PC-9 (cell line): ENCODE measurements at regions of chr7 and their contacts with region 1.

Region 1: DNA sequence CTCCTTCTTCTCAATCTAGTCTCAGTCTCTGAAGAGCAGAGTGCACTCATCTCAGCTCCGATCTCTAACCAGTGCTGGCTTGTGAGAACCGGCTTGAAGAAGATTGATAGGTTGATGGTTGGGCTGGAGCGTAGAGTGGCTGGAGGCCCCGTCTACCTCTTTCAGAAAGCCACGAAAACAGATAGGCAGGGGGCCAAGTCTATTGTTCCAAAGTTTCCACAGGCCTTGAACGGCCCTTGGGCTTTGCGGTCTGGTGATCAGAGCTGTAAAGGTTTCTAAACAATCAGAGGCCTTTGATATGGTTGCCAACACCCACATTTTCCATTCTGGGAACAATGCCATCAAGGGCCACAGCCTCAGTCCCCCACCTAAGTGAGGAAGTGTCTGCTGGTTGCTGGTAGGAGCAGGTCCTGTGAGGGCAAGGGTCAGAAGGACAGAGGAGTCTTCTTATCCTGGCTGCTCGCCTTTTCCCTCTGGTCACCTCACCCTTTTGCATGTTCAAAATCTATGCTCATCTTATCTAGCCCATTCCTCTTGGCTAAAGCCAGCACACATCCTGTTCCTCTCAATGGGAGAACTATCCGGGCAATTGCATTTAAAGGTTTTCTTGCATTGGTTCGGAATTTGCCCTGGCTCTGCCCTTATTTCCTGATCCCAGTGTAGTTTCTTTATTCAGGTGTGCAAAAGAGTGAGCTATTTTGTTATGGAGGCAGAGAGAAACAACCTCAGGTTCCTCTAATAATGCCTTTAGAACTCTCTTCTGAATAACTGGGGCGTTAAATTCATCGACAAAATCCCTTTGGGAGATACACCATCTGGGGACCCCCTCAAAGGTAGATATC is 70.3 kb upstream of the KMT2E start:
- DNase-seq: peak; percentile 48 to 96
- H3K4me3 ChIP-seq: no peak overlapping the region
- H3K27ac ChIP-seq: no peak overlapping the region
- H3K4me1 ChIP-seq: no peaks in the 10 kb centered on the region; the same call in 1 of the 2 replicates
- H3K27me3 ChIP-seq: no peaks in the 10 kb centered on the region
- CTCF ChIP-seq: no peak

Region 2: DNA sequence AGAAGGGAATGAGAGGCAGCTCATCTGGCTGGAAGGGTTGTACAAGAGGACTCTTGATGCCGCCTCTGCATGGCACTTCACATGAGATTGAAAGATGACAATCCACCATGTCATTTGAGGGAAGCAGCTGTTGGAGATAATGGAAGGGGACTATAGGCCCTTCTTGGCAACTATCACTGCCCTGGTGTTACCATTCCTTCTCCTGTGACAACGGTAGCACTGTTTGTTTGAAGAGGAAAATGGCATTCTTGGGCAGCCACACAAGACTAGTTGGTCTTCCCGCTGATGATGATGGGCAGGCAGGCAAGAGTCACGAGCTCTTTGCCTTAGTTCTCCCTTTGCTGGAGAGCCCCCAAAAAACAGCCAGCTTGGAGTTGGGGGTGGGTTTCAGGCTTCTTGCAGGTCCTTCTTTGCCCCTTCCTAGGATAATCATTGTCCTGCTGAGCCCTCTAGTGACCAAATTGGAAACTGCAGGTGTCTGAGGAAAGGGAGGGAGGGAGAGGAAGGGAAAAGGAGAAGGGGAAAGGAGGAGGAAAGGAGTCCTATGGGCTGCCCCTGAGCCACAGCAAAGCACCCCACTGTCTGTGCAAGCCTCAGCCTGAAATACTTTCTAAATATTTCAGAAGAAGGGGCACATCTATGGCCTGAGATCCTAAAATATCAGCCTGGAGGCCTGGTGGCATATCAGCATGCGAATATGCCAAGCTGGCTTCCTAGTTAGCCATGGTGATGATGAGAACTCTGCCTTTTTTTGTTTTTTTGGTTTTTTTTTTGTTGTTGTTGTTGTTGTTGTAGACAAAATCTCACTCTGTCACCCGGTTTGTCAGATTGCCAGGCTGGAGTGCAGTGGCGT is 95.4 kb before region 1 on chr7:
- CTCF ChIA-PET with region 1: no interaction called
- POLR2A ChIA-PET with region 1: no interaction called
- intact Hi-C with region 1: no loop called
- DNase-seq: peak in 1 of 2 experiments; percentile 50
- H3K4me3 ChIP-seq: no peak overlapping the region
- H3K27ac ChIP-seq: no peak overlapping the region
- H3K4me1 ChIP-seq: no peaks in the 10 kb centered on the region
- H3K27me3 ChIP-seq: peaks cover 67% of the 10 kb centered on the region
- CTCF ChIP-seq: peak; percentile 97

Region 3: DNA sequence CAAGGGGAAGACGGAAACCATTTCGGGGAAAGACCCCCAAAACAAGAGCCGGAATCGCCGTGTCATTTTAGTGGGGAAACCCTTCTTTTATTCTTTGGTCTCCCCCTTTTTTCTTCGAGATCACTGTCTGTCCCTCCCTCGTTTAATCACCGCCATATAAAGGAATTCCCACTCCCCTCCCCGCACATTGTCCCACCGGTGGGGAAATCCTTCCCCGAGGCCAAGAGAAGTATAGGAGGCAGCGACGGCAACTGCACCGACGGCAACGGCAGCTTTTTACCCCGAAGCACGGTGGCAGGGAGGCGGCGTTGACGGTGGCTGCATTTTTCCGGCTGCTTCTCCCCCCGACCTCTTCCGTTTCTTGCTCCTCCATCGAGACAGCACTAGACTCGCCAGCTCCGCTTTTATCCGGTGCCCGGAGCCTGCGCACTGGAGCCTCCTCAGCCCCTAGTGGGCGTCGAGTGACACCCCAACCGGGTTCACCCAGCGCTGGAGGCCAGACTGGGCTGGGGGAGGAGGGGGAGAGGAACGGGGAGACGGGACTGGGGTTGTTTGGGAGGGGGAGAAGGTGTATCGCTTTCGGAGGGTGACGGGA is 69.6 kb after region 1 on chr7:
- CTCF ChIA-PET with region 1: no interaction called
- POLR2A ChIA-PET with region 1: interaction called, 3 read pairs
- intact Hi-C with region 1: loop called (anchors 1 kb)
- DNase-seq: peak; percentile 74 to 92
- H3K4me3 ChIP-seq: peak overlapping the region; percentile 95
- H3K27ac ChIP-seq: peak overlapping the region; percentile 98
- H3K4me1 ChIP-seq: peaks cover 55% of the 10 kb centered on the region
- H3K27me3 ChIP-seq: no peaks in the 10 kb centered on the region
- CTCF ChIP-seq: peak; percentile 55; the same call in 1 of the 2 replicates

Region 4: GRCh38 chr7:105278973-105279687 is 335.4 kb after region 1 on chr7:
- CTCF ChIA-PET with region 1: no interaction called
- POLR2A ChIA-PET with region 1: no interaction called
- intact Hi-C with region 1: no loop called
- DNase-seq: no peak
- H3K4me3 ChIP-seq: no peak overlapping the region
- H3K27ac ChIP-seq: no peak overlapping the region
- H3K4me1 ChIP-seq: no peaks in the 10 kb centered on the region
- H3K27me3 ChIP-seq: no peaks in the 10 kb centered on the region
- CTCF ChIP-seq: no peak

Region 5: DNA sequence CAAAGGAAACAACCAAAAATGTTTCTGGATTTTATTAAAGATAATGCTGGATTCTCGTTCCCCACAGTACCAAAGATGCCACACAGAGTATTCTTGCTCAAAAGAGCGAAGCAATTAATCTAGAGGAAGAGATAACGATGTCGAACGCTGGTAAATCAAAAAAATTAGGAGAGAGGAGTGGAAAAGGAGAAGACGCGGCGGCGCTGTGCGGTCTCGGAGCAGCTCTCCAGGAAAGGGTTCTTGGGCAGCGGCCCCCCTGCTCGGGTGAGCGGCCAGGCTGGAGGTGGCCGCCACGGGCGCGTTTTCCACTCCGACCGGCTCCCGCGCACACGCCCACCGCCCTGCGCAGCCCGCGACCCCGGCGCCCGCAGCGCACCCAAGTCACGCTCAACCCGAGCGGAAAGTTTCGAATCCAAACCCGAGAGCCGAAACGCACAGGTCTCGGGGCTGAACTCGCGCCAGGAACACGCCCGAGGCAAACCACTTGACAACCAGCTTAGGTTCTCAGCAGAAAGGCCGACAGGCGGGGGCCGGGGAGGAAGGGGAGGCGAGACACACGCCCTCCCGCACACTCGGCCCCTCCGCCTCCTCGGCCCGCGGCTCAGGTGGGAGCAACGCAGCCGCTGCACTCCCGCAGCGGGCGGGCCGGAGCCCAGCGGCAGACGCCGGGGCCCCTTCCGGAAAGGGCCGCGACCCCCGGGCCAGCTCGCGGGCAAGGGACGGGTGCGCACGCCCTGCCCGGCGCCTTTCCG is 444.1 kb after region 1 on chr7:
- CTCF ChIA-PET with region 1: no interaction called
- POLR2A ChIA-PET with region 1: no interaction called
- intact Hi-C with region 1: loop called (anchors 2 kb)
- DNase-seq: peak; percentile 42 to 62
- H3K4me3 ChIP-seq: peak overlapping the region; percentile 74
- H3K27ac ChIP-seq: no peak overlapping the region
- H3K4me1 ChIP-seq: peaks cover 11% of the 10 kb centered on the region
- H3K27me3 ChIP-seq: no peaks in the 10 kb centered on the region
- CTCF ChIP-seq: no peak

Region 6: DNA sequence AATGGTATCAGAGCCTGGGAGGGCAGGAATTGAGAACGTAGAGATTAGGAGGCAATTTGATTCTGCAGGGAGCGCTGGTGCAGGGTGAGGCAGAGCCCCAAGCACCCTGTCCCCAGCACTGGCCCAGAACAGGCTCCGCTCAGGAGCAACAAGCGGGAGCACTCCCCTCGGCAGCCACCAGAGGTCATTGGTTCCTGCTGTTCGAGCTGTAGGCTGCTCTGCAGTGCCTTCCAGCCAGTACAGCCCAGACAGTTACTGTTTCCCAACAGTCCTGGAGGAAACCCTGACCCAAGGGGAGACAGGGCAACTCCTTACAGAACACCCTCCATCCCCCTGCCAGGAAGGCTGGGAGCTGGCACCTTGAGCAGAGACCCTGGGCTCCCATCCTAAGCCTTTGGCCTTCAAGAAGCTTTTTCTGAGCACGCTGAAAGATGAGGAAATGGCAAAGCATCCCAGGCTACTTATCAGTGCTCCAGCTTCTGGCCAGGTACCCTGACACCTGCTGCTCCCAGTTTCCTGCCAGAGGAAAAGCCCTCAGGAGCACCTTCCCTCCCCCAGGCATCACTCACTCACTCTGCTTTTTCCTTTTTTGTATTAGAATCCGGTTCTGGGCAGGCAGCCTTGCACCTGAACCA is 708.8 kb after region 1 on chr7:
- CTCF ChIA-PET with region 1: no interaction called
- POLR2A ChIA-PET with region 1: no interaction called
- intact Hi-C with region 1: loop called (anchors 10 kb)
- DNase-seq: peak; percentile 43 to 79
- H3K4me3 ChIP-seq: no peak overlapping the region
- H3K27ac ChIP-seq: no peak overlapping the region
- H3K4me1 ChIP-seq: peaks cover 47% of the 10 kb centered on the region
- H3K27me3 ChIP-seq: no peaks in the 10 kb centered on the region
- CTCF ChIP-seq: peak; percentile 87

Region 7: DNA sequence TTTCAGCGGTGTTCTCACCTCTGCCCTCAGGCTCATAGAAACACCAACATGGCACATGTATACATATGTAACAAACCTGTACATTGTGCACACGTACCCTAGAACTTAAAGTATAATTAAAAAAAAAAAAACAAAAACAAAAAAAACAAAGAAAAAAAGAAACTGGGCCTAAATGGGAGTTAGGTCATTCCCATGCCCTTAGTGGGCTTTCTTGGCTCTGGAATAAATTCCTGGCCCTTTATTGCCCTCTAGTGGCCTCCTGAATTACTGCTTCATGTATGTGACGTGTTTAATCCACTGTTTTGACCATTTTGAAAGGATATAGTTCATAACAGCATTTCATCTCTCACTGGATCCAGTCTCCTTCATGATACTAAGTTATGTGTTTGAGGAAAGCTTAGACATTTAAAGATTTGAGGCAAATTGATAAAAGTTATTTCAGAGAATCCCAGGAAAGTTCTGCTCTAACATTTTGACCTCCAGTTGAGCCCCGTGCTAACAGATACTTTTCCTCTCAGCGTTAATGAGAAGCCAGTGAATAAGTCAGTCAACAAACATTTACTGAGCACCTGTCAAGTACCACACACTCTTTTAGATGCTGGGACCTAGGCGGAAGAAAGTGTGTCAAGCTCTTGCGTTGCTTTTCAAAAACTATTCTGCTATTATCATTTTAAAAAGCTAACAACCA is 1223.1 kb after region 1 on chr7:
- CTCF ChIA-PET with region 1: no interaction called
- POLR2A ChIA-PET with region 1: no interaction called
- intact Hi-C with region 1: loop called (anchors 1 kb)
- DNase-seq: peak; percentile 51 to 53
- H3K4me3 ChIP-seq: no peak overlapping the region
- H3K27ac ChIP-seq: no peak overlapping the region
- H3K4me1 ChIP-seq: no peaks in the 10 kb centered on the region
- H3K27me3 ChIP-seq: no peaks in the 10 kb centered on the region
- CTCF ChIP-seq: peak; percentile 92